ENCODE measurements at regions of chr18 and their contacts with region 1.

Region 1: DNA sequence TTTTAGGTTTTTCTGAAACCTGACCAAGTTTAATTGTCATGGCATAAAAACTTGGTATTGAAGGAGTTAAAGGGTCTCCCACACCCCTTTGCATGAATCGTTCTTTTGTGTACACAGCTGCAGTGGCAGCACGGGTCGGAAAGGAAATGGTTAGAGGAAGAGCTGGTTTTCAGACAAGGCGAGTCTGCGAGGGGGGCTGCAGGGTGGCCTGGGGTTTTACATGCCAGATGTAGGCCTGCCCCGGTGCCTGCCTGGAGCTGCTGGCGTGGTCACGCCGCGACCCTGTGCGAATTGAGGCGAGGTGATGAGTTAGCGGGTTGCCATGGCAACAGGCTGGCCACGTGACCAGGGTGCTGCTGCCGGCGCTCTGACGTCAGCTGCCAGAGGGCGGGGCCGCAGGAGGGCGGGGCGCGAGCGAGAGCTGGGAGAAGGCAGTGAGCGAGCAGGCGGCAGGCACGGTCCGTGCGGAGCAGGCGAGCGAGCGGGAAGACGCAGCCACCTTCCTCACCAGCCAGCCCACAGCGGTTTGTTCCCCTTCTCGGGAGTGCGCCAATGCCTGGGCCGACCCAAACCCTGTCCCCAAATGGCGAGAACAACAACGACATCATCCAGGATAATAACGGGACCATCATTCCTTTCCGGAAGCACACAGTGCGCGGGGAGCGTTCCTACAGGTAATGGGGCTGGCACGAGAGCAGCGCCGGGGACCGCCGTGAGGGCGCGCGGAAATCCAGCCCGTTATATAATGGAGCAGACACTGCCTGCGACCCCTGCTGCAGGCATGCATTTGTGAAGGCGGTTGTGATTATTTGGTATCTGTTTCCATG is at the start of gene MAPRE2:
- DNase-seq: peak; percentile 100
- ATAC-seq: peak; percentile 76
- H3K4me3 Mint-ChIP-seq: peak within 1 kb of the TSS; percentile 97
- H3K27ac Mint-ChIP-seq: peak within 1 kb of the TSS; percentile 98
- H3K4me1 Mint-ChIP-seq: peaks cover 57% of the 10 kb centered on the region
- H3K27me3 Mint-ChIP-seq: no peaks in the 10 kb centered on the region
- total RNA-seq, gene MAPRE2: 59.4 to 83.8 TPM

Region 2: DNA sequence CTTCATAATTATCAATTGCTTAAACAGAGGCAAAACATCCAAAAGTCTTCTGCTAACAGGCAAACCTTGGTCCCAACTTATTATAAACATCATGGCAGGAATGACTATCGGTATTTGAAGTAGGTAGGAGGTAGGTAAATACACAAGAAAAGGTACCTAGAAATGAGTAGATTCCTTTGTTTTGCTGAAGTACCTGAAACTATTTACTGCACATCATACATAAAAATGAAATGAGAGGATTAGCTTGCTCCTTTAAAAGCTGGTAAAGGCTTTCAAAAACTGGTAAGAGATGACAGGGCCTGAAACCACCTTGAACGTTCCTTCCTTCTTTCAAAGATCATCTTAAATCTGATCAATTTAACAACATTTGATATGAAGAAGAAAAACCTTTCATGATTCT is 55.2 kb before region 1 on chr18:
- CTCF ChIA-PET with region 1: no interaction called
- POLR2A ChIA-PET with region 1: no interaction called
- intact Hi-C with region 1: no loop called
- DNase-seq: no peak
- ATAC-seq: peak; percentile 64
- H3K4me3 Mint-ChIP-seq: no peak overlapping the region
- H3K27ac Mint-ChIP-seq: no peak overlapping the region
- H3K4me1 Mint-ChIP-seq: no peaks in the 10 kb centered on the region
- H3K27me3 Mint-ChIP-seq: peaks cover 3% of the 10 kb centered on the region

Region 3: DNA sequence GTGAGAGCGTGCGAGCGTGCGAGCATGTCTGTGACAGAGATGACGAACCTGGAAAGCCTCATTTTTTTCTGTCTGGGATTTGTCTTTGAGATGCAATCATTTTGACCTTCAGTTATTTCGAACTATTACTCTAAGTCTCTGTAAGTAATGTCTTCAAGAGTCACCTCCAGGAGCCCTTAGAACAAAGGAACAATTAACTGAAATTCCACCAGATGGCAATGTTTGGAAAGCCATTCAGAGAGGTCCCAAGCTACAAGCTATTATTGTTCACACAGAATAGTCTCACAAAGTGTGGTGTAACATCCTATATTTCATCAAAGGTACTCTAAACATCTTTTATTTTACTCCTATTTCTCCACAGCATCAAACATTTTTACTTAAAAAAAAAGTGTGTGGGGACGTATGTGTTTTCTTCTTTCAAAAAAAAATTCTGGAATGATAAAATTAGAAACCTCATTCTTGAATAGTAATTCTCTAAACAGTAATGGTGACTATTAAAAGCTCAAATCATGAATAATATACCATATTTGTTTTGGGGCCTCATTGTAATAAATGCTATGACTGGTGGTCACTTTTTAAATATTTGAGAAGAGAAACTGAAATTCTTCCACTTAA is 35.1 kb before region 1 on chr18:
- CTCF ChIA-PET with region 1: interaction called, 5 read pairs
- POLR2A ChIA-PET with region 1: no interaction called
- intact Hi-C with region 1: loop called in 1 of 2 experiments (anchors 5 kb)
- DNase-seq: no peak
- ATAC-seq: peak; percentile 94
- H3K4me3 Mint-ChIP-seq: no peak overlapping the region
- H3K27ac Mint-ChIP-seq: no peak overlapping the region
- H3K4me1 Mint-ChIP-seq: no peaks in the 10 kb centered on the region
- H3K27me3 Mint-ChIP-seq: no peaks in the 10 kb centered on the region

Region 4: DNA sequence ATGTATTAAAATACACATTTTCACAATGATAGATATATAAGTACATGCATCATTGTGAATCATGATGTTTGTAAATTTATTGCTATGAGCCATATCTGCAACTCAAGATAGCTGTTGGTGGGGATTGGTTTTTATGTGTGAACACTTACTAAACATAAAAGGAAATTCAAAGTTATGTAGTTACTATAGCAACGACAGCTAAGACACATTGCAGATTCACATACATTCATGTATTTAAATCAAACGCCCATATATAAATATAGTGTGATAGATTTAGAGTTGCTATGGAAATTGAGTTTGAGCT is 65.6 kb after region 1 on chr18:
- CTCF ChIA-PET with region 1: interaction called, 4 read pairs
- POLR2A ChIA-PET with region 1: no interaction called
- intact Hi-C with region 1: loop called (anchors 2 to 5 kb)
- DNase-seq: no peak
- ATAC-seq: peak; percentile 85
- H3K4me3 Mint-ChIP-seq: no peak overlapping the region
- H3K27ac Mint-ChIP-seq: peak overlapping the region; percentile 48
- H3K4me1 Mint-ChIP-seq: peaks cover 56% of the 10 kb centered on the region
- H3K27me3 Mint-ChIP-seq: no peaks in the 10 kb centered on the region

Region 5: GRCh38 chr18:35158728-35159450 is 117.7 kb after region 1 on chr18:
- CTCF ChIA-PET with region 1: no interaction called
- POLR2A ChIA-PET with region 1: no interaction called
- intact Hi-C with region 1: no loop called
- DNase-seq: peak; percentile 51
- ATAC-seq: peak; percentile 78
- H3K4me3 Mint-ChIP-seq: no peak overlapping the region
- H3K27ac Mint-ChIP-seq: peak overlapping the region; percentile 94
- H3K4me1 Mint-ChIP-seq: peaks cover 28% of the 10 kb centered on the region
- H3K27me3 Mint-ChIP-seq: no peaks in the 10 kb centered on the region

Region 6: GRCh38 chr18:35247444-35248249 is 206.4 kb after region 1 on chr18:
- CTCF ChIA-PET with region 1: no interaction called
- POLR2A ChIA-PET with region 1: no interaction called
- intact Hi-C with region 1: no loop called
- DNase-seq: no peak
- ATAC-seq: no peak
- H3K4me3 Mint-ChIP-seq: no peak overlapping the region
- H3K27ac Mint-ChIP-seq: no peak overlapping the region
- H3K4me1 Mint-ChIP-seq: peaks cover 23% of the 10 kb centered on the region
- H3K27me3 Mint-ChIP-seq: no peaks in the 10 kb centered on the region

Region 7: DNA sequence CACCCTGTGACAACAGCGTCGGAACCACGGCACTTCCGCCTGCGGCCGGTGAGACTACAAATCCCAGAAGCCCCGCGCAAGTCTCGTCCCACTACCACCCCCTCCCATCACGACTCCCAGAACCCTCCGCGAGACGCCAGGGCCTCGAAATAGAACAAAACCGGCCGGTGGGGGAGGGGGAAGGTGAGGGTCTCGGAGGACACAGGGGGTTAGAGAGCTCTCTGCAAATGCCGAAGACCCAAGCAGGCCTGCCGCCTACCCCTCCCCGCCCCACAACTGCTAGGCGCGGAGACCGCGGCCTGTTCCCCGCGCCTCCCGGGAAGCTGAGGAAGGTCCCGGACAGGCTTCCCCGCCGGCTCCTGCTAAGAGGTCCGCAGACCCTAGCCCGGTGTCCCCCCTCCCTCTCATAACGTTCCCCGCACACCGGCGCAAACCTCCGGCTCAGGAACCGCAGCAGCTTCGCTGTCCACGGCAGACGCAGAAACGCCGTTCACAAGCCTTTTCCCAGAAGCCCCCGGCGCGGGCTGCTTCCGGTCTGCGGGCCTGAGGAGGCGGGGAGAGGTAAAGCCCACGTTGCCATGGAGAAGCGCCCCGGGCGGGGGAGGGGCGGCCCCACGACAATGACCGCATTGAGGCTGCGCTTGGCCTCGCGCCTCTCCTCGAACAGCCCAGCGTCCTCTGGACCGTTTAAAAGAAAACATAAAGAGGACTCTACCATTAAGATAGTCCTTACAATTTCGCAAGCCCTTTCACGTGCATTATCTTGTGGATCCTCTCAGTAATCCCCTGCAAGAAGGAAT is 302.9 kb after region 1 on chr18 and contains the start of gene ZNF24:
- CTCF ChIA-PET with region 1: no interaction called
- POLR2A ChIA-PET with region 1: no interaction called
- intact Hi-C with region 1: loop called (anchors 1 kb)
- DNase-seq: peak; percentile 96
- ATAC-seq: peak; percentile 93
- H3K4me3 Mint-ChIP-seq: peak within 1 kb of the TSS; percentile 86
- H3K27ac Mint-ChIP-seq: peak within 1 kb of the TSS; percentile 94
- H3K4me1 Mint-ChIP-seq: peaks cover 38% of the 10 kb centered on the region
- H3K27me3 Mint-ChIP-seq: no peaks in the 10 kb centered on the region
- total RNA-seq, gene ZNF24: 31.7 to 50.9 TPM

Region 8: DNA sequence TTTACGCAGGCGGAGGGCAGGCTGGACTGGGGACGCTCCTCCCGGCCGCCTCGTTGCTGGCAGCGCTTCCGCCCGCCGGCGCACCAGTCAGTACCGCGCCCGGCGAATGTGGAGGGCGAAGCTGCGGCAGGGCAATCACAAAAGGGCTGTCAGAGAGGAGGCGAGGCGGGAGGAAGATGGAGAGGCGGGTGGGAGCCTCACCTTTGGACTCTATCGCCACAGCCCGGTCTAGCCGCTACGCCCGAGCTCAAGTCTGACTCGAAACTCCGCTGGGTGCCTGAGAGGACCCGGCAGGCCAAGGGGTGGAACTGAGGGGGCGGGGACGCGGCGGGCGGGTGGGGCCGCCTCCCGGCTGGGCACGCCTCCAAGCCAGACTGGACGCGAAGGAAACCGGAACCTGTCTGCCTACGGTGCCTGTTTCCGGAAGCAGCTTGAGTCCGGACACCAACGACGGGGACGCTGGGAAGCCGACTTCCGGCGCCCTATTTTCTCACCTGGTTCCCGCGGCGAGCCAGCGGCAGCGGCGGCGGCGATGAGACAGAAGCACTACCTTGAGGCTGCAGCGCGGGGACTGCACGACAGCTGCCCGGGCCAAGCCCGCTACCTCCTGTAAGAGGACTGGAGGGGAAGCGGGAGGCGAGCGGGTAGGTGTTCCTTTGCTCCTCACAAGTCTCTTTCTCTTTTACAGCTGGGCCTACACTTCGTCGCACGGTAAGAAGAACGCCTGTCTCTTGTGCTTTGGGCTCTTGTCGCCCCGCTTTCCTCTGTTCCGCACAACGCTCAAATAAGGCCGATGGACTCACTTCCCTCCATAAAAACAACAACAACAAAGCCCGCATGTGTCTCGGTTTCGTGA is 931.2 kb after region 1 on chr18 and contains the start of gene RMP24:
- CTCF ChIA-PET with region 1: no interaction called
- POLR2A ChIA-PET with region 1: no interaction called
- intact Hi-C with region 1: loop called in 1 of 2 experiments (anchors 5 kb)
- DNase-seq: peak; percentile 97
- ATAC-seq: peak; percentile 87
- H3K4me3 Mint-ChIP-seq: peak within 1 kb of the TSS; percentile 99
- H3K27ac Mint-ChIP-seq: peak within 1 kb of the TSS; percentile 96
- H3K4me1 Mint-ChIP-seq: peaks cover 49% of the 10 kb centered on the region
- H3K27me3 Mint-ChIP-seq: no peaks in the 10 kb centered on the region